ENCODE measurements at regions of chr11 and their contacts with region 1.

Region 1: GRCh38 chr11:118145285-118146227 is 7.1 kb downstream of the SCN4B start:
- DNase-seq: peak; percentile 94
- CTCF ChIP-seq: peak; percentile 92

Region 2: GRCh38 chr11:118132385-118133151 is 13.0 kb before region 1 on chr11:
- CTCF ChIA-PET with region 1: interaction called, 10 read pairs
- POLR2A ChIA-PET with region 1: no interaction called
- DNase-seq: no peak
- CTCF ChIP-seq: no peak

Region 3: DNA sequence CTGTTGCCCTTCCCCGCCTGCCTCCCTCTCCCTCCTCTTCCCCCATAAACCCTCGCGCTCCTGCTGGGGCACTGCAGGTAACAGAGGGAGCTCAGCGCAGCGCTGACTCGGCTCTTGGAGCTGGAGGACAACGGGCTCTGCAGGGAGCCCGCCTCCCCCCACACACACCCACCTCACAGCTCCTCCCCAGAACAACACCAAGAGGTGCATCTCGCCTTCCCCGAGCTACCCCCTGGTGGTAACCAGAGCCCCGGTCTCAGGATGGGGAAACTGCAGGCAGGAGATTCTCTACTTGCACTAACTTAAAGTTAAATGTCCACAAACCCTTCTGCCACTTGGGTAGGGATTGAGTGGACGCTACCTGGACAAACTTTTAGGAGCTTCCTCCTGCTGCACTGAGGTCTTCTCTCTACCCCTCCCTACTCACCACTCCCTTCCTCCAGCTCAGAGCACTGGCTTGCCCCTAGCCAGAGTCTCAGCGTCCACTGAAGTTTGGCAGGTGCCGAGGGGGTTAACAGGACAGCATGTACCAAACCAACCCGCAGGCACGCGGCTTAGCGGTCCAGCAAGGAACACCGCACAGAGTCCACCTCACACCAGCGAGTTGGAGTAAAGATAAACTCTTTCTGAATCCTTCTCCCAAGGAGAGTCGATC is 11.1 kb after region 1 on chr11:
- CTCF ChIA-PET with region 1: interaction called, 25 read pairs
- POLR2A ChIA-PET with region 1: no interaction called
- DNase-seq: no peak
- CTCF ChIP-seq: no peak

Measured in GM10248 (cell line).